Astrocyte of the cerebellum (primary cell): ENCODE measurements at regions of chr19 and their contacts with region 1.

Region 1: GRCh38 chr19:14517840-14518505 is at the start of gene DNAJB1:
- DNase-seq: no peak
- H3K4me3 ChIP-seq: peak within 1 kb of the TSS; percentile 86
- CTCF ChIP-seq: no peak

Region 2: GRCh38 chr19:14419106-14419813 is 98.7 kb before region 1 on chr19 and contains the start of gene DDX39A:
- in situ Hi-C with region 1: loop called (anchors 25 kb)
- DNase-seq: peak; percentile 99
- H3K4me3 ChIP-seq: peak within 1 kb of the TSS; percentile 66
- CTCF ChIP-seq: no peak

Region 3: GRCh38 chr19:14616407-14616806 is 98.4 kb after region 1 on chr19:
- in situ Hi-C with region 1: no loop called
- DNase-seq: no peak
- H3K4me3 ChIP-seq: no peak overlapping the region
- CTCF ChIP-seq: no peak